ENCODE measurements at regions of chr12 and their contacts with region 1.

Region 1: GRCh38 chr12:25320123-25321006 is 69.6 kb upstream of the KRAS start:
- DNase-seq: peak; percentile 25
- H3K4me3 Mint-ChIP-seq: no peak overlapping the region
- H3K27ac Mint-ChIP-seq: peak overlapping the region; percentile 53
- H3K4me1 Mint-ChIP-seq: peaks cover 48% of the 10 kb centered on the region
- H3K27me3 Mint-ChIP-seq: no peaks in the 10 kb centered on the region

Region 2: DNA sequence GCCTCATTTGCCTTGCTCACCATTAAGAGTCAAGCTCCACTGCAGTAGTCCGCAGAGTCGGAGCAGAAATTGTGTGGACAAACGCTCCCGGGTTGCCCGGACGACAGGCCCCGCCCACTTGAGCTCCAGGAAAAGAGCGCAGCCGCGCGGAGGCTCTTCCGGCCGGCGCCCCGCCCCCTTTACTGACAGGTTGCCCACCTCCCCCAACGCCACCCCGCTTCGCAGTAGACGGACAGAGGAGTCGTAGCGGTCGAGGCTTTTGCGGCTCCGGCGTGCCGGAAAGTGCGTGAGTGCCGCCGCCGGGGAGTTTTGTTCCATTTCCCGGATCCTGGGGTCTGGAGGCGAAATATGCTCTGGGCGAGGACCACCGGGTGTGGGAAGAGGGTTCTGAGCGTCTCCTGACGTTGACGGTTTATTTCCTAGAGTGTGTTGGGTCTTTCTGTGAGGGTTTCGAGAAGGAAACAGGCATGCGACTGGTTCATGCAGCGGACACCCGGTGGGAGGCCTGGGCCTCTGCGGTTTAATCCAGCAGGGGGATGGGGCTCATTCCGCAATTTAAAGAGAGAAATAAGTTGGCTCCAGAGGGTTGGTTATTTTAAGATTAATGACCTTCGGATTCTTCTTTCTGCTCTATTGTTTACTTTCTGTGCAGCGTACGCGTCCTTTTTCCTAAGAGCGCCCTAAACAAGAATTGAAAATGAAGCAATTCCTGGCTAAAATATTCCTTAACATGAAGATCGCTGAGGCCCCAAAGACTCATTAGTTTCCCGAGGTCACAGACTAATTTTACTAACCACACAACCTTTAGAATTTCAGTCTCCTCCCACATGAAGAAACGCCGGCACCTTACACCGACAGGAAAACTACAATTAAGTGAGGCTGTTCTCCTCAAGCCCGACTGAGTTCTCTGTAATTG is 125.1 kb before region 1 on chr12 and contains the starts of genes DNAI7 and ETFRF1:
- CTCF ChIA-PET with region 1: no interaction called
- POLR2A ChIA-PET with region 1: no interaction called
- intact Hi-C with region 1: loop called (anchors 5 kb)
- DNase-seq: peak; percentile 97
- H3K4me3 Mint-ChIP-seq: peak within 1 kb of the TSS; percentile 95
- H3K27ac Mint-ChIP-seq: peak within 1 kb of the TSS; percentile 92
- H3K4me1 Mint-ChIP-seq: peaks cover 21% of the 10 kb centered on the region
- H3K27me3 Mint-ChIP-seq: no peaks in the 10 kb centered on the region
- total RNA-seq, gene DNAI7: 0.10 TPM in 1 of 2 experiments, not detected in the other
- total RNA-seq, gene ETFRF1: 9.8 to 10.1 TPM

Region 3: GRCh38 chr12:25250744-25251730 is 69.3 kb before region 1 on chr12 and contains the start of gene KRAS:
- CTCF ChIA-PET with region 1: no interaction called
- POLR2A ChIA-PET with region 1: no interaction called
- intact Hi-C with region 1: loop called (anchors 1 kb)
- DNase-seq: peak; percentile 92
- H3K4me3 Mint-ChIP-seq: peak within 1 kb of the TSS; percentile 91
- H3K27ac Mint-ChIP-seq: peak within 1 kb of the TSS; percentile 82
- H3K4me1 Mint-ChIP-seq: peaks cover 30% of the 10 kb centered on the region
- H3K27me3 Mint-ChIP-seq: no peaks in the 10 kb centered on the region
- total RNA-seq, gene KRAS: 15.9 to 17.8 TPM

Region 4: GRCh38 chr12:25364529-25365339 is 44.4 kb after region 1 on chr12:
- CTCF ChIA-PET with region 1: no interaction called
- POLR2A ChIA-PET with region 1: interaction called, 8 read pairs
- intact Hi-C with region 1: loop called (anchors 1 kb)
- DNase-seq: peak; percentile 83
- H3K4me3 Mint-ChIP-seq: peak overlapping the region; percentile 16
- H3K27ac Mint-ChIP-seq: peak overlapping the region; percentile 2
- H3K4me1 Mint-ChIP-seq: peaks cover 16% of the 10 kb centered on the region
- H3K27me3 Mint-ChIP-seq: peaks cover 10% of the 10 kb centered on the region

Measured in activated CD4-positive, alpha-beta memory T cell treated with anti-CD3 and anti-CD28 coated beads for 36 hours (primary cell).